ENCODE measurements at regions of chr15 and their contacts with region 1.

Region 1: GRCh38 chr15:34708422-34708821 is 46.4 kb downstream of the GJD2 start:
- DNase-seq: no peak
- H3K4me3 ChIP-seq: no peak overlapping the region
- H3K27ac ChIP-seq: no peak overlapping the region
- H3K4me1 ChIP-seq: no peaks in the 10 kb centered on the region
- H3K27me3 ChIP-seq: no peaks in the 10 kb centered on the region
- CTCF ChIP-seq: peak in 5 of 6 experiments; percentile 19 to 67 (median 54)
- POLR2A ChIP-seq: no peak

Region 2: DNA sequence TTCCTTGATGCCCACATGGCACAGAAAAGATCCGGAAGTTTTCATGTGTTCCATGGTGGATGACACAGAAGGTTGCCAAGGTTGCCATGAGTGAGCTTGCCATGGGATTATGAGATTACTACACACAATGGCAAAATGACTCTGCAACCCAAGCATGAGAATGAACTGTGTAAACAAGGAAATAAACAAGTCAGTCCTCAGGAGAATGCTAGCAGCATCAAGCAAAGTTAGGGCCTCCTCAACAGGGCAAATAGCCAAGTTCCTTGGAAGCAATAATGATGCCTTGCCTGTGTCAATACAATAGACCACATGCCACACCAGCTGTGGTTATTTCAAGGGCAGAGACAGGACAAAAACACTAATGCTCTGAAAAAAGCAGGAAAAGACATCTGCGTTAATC is 219.3 kb after region 1 on chr15:
- intact Hi-C with region 1: loop called (anchors 5 kb)
- DNase-seq: no peak
- H3K4me3 ChIP-seq: no peak overlapping the region
- H3K27ac ChIP-seq: no peak overlapping the region
- H3K4me1 ChIP-seq: no peaks in the 10 kb centered on the region
- H3K27me3 ChIP-seq: no peaks in the 10 kb centered on the region
- CTCF ChIP-seq: no peak
- POLR2A ChIP-seq: no peak